Activated CD4-positive, alpha-beta T cell treated with anti-CD3 and anti-CD28 coated beads, Interleukin-2, amount 10 ng/mL, durations not matched to agents 7 days and 5 days (primary cell): ENCODE measurements at regions of chr16 and their contacts with region 1.

Region 1: DNA sequence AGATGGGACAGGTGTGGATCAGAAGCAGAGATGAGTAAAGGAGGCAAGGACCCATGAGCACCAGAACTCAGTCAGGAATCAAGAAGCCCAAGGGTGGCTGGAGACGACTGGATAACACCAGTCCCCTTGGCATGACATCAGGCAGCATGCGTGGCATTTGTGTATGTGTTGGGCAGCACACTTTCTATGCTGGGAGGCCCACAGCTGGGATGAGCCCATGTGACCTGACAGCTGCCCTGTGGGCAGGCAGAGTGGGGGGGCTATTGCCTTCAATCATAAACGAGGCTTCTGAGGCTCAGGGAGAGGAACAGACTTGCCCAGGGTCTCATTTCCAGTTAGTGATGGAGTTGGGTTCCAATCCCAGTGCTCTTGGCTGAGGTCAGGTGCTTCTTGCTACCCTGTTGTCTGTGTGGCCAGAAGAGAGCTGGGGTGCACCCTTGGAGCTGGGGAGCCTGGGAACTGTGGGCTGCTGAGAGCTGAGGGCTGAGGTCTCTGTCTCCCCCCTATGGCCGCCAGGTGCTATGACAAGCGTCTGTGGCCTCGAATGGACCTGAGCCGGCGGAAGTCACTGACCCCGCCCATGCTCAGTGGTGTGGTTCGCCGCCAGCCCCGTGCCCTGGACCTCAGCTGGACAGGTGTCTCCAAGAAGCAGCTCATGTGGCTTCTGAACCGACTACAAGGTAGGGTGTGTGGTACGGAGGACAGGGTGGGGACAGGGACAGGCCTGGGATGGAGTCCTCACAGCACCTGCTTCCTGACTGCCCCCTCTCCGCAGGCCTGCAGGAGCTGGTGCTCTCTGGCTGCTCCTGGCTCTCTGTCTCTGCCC is 7.1 kb upstream of the ORAI3 start:
- DNase-seq: peak; percentile 74
- H3K4me3 Mint-ChIP-seq: peak overlapping the region; percentile 51
- H3K27ac Mint-ChIP-seq: peak overlapping the region; percentile 72
- H3K4me1 Mint-ChIP-seq: peaks cover 34% of the 10 kb centered on the region
- H3K27me3 Mint-ChIP-seq: no peaks in the 10 kb centered on the region

Region 2: GRCh38 chr16:30813821-30814189 is 128.0 kb before region 1 on chr16:
- CTCF ChIA-PET with region 1: interaction called, 10 read pairs
- POLR2A ChIA-PET with region 1: no interaction called
- DNase-seq: no peak
- H3K4me3 Mint-ChIP-seq: peak overlapping the region; percentile 87
- H3K27ac Mint-ChIP-seq: peak overlapping the region; percentile 91
- H3K4me1 Mint-ChIP-seq: peaks cover 14% of the 10 kb centered on the region
- H3K27me3 Mint-ChIP-seq: no peaks in the 10 kb centered on the region

Region 3: DNA sequence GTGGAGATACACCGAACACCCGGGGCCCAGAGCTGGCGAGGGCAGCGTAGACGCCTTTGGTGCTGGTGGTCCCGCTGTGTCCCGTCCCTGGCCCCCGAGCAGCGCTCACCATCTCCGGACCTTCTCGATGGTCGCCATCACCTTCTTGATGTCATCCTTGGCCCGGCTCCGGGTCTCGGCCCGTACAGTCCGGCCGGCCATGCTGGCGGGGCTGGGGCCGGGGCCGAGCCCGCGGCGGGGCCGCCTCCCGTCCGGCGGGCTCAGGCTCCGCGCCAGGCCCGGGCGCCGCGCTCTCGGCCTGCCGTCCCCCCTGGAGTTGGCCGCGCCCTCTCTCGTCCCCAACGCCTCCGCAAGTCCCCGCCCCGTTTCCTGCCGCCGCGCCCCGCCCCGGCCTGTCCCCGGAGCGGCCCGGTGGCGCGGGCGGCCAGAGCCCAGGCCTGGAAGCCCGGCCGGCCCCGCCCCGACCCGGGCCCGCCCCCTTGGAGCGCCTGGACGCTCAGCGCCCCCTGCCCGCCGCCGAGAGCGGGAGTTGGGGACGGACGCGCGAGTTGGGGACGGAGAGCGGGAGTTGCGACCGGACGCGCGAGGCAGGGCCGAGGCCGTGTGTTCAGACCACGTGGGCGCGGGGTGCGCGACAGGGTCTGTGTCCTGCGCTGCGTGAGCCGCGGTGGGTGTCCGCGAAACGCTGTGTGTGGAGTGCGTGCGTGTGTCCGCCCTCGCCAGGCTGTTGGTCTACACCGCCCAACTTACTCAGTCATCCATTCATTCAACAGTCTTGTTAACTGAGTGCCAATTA is 47.9 kb before region 1 on chr16 and contains the start of gene BCL7C:
- CTCF ChIA-PET with region 1: no interaction called
- POLR2A ChIA-PET with region 1: no interaction called
- DNase-seq: peak; percentile 83
- H3K4me3 Mint-ChIP-seq: peak within 1 kb of the TSS; percentile 81
- H3K27ac Mint-ChIP-seq: peak within 1 kb of the TSS; percentile 90
- H3K4me1 Mint-ChIP-seq: peaks cover 52% of the 10 kb centered on the region
- H3K27me3 Mint-ChIP-seq: no peaks in the 10 kb centered on the region
- total RNA-seq, gene BCL7C: 21.8 to 22.1 TPM

Region 4: DNA sequence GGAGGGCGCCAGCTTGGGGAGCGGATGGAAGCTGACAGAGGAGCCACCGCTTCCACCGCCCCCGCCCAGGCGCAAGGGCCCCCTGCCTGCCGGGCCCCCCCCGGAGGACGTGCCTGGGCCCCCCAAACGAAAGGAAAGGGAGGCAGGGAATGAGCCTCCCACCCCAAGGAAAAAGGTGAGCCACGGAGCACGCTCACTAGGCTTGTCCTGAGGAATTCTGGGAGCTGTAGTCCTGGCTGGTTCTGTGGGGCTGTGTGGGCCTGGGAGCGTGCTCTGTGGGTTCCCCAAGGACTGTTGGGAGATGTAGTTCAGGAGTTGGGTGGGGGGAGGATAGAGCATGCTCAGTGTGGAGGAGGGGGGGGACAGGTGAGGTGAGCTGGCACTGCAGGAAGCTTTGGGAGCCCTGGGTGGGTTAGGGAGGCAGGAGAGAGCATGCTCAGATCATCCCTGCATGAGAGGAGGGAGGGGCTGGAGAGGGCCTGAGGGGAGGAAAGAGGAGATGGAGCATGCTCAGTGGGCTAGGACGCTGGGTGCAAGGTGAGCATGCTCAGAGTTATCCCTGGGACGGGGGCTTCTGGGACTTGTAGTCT is 13.9 kb before region 1 on chr16:
- CTCF ChIA-PET with region 1: interaction called, 48 read pairs
- POLR2A ChIA-PET with region 1: no interaction called
- DNase-seq: peak; percentile 30
- H3K4me3 Mint-ChIP-seq: no peak overlapping the region
- H3K27ac Mint-ChIP-seq: no peak overlapping the region
- H3K4me1 Mint-ChIP-seq: peaks cover 19% of the 10 kb centered on the region
- H3K27me3 Mint-ChIP-seq: no peaks in the 10 kb centered on the region